Heart left ventricle (tissue), 16 donors: ENCODE measurements at regions of chr7 and their contacts with region 1.

Region 1: GRCh38 chr7:95608359-95609173 is 12.2 kb upstream of the PDK4 start:
- DNase-seq: peak; percentile 91 to 97 (median 93)
- ATAC-seq: peak; percentile 97 to 100 (median 98)
- H3K4me3 ChIP-seq: peak overlapping the region in 10 of 12 donors; percentile 19 to 50 (median 30)
- H3K27ac ChIP-seq: peak overlapping the region; percentile 76 to 95 (median 90)
- H3K4me1 ChIP-seq: peaks cover 17 to 76% (median 39%) of the 10 kb centered on the region in 12 donors
- H3K27me3 ChIP-seq: no peaks in the 10 kb centered on the region
- CTCF ChIP-seq: no peak
- POLR2A ChIP-seq: peak in 1 of 2 donors; percentile 38

Region 2: GRCh38 chr7:95434557-95435421 is 173.8 kb before region 1 on chr7 and contains the start of gene PON2:
- intact Hi-C with region 1: loop called in 1 of 10 experiments (anchors 10 kb)
- DNase-seq: peak; percentile 80 to 91 (median 89)
- ATAC-seq: peak; percentile 94 to 100 (median 99)
- H3K4me3 ChIP-seq: peak within 1 kb of the TSS; percentile 68 to 89 (median 79)
- H3K27ac ChIP-seq: peak within 1 kb of the TSS; percentile 83 to 97 (median 92)
- H3K4me1 ChIP-seq: peaks cover 0 to 15% (median 10%) of the 10 kb centered on the region in 12 donors
- H3K27me3 ChIP-seq: no peaks in the 10 kb centered on the region
- CTCF ChIP-seq: peak in 3 of 12 donors; percentile 5 to 17 (median 11)
- POLR2A ChIP-seq: peak in 1 of 2 donors; percentile 65
- total RNA-seq, gene PON2: 26.3 to 50.6 (median 35.7) TPM

Region 3: DNA sequence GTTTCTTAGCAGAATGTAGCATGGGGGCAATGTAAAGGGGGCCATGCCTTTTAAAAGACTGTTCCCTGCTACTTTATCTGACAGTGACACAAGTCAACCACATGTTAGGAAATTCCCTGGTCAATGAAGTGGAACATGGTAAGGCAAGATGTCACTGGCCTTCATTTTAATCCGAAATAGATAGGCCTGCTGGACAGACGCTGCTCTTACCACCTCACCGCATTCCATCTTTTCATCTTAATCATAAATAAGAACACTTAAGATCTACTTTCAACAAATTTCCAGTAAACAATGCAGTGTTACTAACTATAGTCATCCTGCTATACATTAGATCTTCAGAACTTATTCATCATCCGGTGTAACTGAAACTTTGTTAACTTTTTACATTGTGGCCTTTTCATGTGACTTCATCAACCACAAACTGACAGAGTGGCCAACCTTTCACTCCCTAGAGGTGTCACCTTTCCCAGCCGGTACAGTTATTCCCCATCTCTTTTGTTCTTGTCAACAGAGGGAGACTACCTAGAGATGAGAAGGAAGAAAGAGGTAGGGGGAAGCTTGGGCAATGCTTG is 107.2 kb before region 1 on chr7:
- intact Hi-C with region 1: no loop called
- DNase-seq: no peak
- ATAC-seq: no peak
- H3K4me3 ChIP-seq: no peak overlapping the region
- H3K27ac ChIP-seq: no peak overlapping the region
- H3K4me1 ChIP-seq: peaks cover 0 to 4% (median 0%) of the 10 kb centered on the region in 12 donors
- H3K27me3 ChIP-seq: no peaks in the 10 kb centered on the region
- CTCF ChIP-seq: no peak
- POLR2A ChIP-seq: no peak

Region 4: GRCh38 chr7:95596198-95597063 is 12.1 kb before region 1 on chr7 and contains the start of gene PDK4:
- intact Hi-C with region 1: loop called in 3 of 10 experiments (anchors 1 kb)
- DNase-seq: peak; percentile 92 to 97 (median 95)
- ATAC-seq: peak; percentile 83 to 96 (median 90)
- H3K4me3 ChIP-seq: peak within 1 kb of the TSS; percentile 70 to 98 (median 84)
- H3K27ac ChIP-seq: peak within 1 kb of the TSS; percentile 87 to 99 (median 96)
- H3K4me1 ChIP-seq: peaks cover 5 to 62% (median 40%) of the 10 kb centered on the region in 12 donors
- H3K27me3 ChIP-seq: no peaks in the 10 kb centered on the region
- CTCF ChIP-seq: no peak
- POLR2A ChIP-seq: peak; percentile 72 to 100
- total RNA-seq, gene PDK4: 45.6 to 4,362 (median 173) TPM

Region 5: DNA sequence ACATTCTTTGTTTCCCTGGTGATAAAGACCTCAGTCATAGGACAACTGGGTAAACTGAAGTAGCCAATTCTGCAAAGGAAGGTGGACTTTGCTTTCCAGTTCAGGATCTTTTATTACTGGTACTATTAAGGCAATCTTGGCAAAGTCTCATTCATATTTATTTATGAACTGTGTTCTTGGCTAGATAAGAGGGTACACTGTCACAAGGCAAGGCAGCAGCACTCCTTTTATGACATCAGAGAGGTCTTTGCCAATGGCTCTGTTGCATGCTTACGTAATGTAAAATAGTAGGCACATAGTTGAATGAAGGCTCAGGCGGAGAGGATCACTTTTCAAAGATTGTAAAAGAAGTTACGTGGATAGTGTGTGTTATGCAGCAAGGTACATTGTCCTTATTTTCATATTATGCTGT is 51.5 kb after region 1 on chr7:
- intact Hi-C with region 1: loop called in 1 of 10 experiments (anchors 1 kb)
- DNase-seq: peak in 2 of 5 donors; percentile 22 to 31
- ATAC-seq: peak; percentile 90 to 98 (median 94)
- H3K4me3 ChIP-seq: no peak overlapping the region
- H3K27ac ChIP-seq: peak overlapping the region in 3 of 12 donors; percentile 25 to 75 (median 60)
- H3K4me1 ChIP-seq: peaks cover 0 to 2% (median 0%) of the 10 kb centered on the region in 12 donors
- H3K27me3 ChIP-seq: no peaks in the 10 kb centered on the region
- CTCF ChIP-seq: no peak
- POLR2A ChIP-seq: no peak

Region 6: DNA sequence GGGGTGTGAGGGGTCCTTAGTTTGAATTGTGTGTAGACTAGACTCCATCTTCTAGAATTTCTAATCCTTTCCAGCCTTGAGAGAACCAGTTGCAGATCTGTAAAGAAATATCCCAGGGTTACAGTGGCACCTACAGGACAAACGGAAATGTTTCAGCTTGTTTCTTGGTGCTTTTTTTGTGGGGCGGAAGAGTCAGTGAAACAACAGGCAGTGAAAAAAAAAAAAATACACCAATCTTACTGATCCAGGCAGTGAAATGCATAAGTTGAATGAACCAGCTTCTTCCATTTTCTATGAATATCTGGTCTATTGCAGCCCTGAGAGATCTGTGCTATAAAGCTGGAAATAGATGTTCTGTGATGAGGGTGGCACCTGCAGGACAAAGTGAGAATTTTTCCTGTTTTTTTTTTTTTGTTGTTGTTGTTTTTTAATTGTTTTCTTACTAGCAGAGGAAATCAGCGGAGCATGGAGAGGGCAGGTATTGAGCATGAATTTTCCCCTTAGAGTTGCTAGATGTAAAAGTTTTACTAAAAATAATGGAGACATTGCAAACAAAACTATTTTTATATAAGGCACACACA is 81.9 kb after region 1 on chr7:
- intact Hi-C with region 1: loop called in 1 of 10 experiments (anchors 10 kb)
- DNase-seq: peak in 2 of 5 donors; percentile 11 to 18
- ATAC-seq: peak; percentile 26 to 64 (median 56)
- H3K4me3 ChIP-seq: peak overlapping the region in 2 of 12 donors; percentile 11 to 42
- H3K27ac ChIP-seq: no peak overlapping the region
- H3K4me1 ChIP-seq: peaks cover 0 to 7% (median 0%) of the 10 kb centered on the region in 12 donors
- H3K27me3 ChIP-seq: no peaks in the 10 kb centered on the region
- CTCF ChIP-seq: peak; percentile 39 to 76 (median 64)
- POLR2A ChIP-seq: no peak

Region 7: DNA sequence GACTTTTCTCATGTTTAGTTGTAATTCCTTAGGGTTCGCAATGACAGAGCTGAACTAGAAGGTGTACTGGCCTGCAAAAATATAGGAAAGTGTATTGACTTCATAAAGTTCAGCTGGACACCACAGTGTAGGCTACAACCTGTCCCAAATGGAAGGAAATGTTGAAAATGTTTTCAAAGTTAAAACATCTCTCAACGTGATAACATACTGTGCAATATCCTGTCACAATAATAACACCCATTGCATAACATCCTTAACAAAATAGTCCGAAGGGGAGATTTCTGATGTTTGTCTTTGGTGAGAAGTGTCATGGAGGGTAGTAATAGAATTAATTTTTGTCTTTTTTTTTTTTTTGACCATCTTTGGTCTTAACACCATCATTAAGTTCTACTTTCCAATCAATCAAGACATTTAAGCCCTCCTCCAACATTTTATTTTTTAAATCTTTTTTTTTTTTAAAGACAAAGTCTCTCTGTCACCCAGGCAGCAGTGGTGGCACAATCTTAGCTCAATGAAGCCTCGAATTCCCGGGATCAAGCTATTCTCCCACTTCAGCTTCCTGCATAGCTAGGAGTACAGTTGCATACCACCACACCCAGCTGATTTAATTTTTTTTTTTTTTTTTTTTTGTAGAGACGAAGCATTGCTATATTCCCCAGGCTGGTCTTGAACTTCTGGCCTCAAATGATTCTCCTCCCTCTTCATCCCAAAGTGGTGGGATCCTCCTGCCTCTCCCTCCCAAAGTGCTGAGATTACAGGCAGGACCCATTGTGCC is 209.5 kb after region 1 on chr7:
- intact Hi-C with region 1: no loop called
- DNase-seq: no peak
- ATAC-seq: no peak
- H3K4me3 ChIP-seq: no peak overlapping the region
- H3K27ac ChIP-seq: no peak overlapping the region
- H3K4me1 ChIP-seq: no peaks in the 10 kb centered on the region
- H3K27me3 ChIP-seq: no peaks in the 10 kb centered on the region
- CTCF ChIP-seq: no peak
- POLR2A ChIP-seq: no peak